ENCODE measurements at regions of chr10 and their contacts with region 1.

Region 1: GRCh38 chr10:34768261-34768971 is 46.7 kb downstream of the PARD3 start:
- DNase-seq: peak; percentile 72 to 88 (median 83)
- ATAC-seq: peak; percentile 94 to 98 (median 98)
- H3K4me3 ChIP-seq: peak overlapping the region in 3 of 12 donors; percentile 18 to 34 (median 26)
- H3K27ac ChIP-seq: peak overlapping the region in 4 of 12 donors; percentile 1 to 65 (median 42)
- H3K4me1 ChIP-seq: peaks cover 0 to 46% (median 17%) of the 10 kb centered on the region in 12 donors
- H3K27me3 ChIP-seq: no peaks in the 10 kb centered on the region
- CTCF ChIP-seq: no peak
- POLR2A ChIP-seq: no peak

Region 2: DNA sequence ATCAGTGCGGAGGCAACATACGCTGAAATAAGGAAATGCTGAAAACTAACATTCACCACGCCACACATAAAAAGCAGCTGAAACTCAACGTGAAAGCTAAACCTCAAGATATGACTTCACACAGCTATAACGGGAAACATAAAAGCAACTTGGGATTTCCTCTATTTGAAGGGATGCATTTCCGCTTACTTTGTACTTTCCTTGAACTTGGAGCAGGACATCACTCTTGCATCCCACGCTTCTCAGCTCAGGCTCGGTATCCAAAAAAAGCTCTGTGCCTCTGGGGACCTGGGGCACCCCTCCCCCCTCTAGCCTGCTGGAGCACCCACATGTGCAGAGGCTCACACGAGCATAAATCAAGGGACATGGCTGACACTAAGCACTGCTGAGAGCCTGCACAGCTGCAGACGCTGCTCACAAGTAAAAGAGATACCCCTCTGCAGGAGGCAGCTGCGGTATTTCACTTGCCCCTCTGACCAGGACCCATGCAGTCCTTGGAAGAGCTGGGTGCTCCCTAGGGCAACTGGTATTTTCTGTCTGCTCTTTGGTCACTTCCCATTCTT is 12.5 kb after region 1 on chr10:
- intact Hi-C with region 1: loop called in 1 of 10 experiments (anchors 1 kb)
- DNase-seq: peak; percentile 69 to 78 (median 71)
- ATAC-seq: peak; percentile 81 to 90 (median 86)
- H3K4me3 ChIP-seq: peak overlapping the region in 5 of 12 donors; percentile 1 to 23 (median 12)
- H3K27ac ChIP-seq: peak overlapping the region in 9 of 12 donors; percentile 5 to 53 (median 36)
- H3K4me1 ChIP-seq: peaks cover 11 to 43% (median 29%) of the 10 kb centered on the region in 12 donors
- H3K27me3 ChIP-seq: no peaks in the 10 kb centered on the region
- CTCF ChIP-seq: no peak
- POLR2A ChIP-seq: no peak